ENCODE measurements at regions of chr17 and their contacts with region 1.

Region 1: DNA sequence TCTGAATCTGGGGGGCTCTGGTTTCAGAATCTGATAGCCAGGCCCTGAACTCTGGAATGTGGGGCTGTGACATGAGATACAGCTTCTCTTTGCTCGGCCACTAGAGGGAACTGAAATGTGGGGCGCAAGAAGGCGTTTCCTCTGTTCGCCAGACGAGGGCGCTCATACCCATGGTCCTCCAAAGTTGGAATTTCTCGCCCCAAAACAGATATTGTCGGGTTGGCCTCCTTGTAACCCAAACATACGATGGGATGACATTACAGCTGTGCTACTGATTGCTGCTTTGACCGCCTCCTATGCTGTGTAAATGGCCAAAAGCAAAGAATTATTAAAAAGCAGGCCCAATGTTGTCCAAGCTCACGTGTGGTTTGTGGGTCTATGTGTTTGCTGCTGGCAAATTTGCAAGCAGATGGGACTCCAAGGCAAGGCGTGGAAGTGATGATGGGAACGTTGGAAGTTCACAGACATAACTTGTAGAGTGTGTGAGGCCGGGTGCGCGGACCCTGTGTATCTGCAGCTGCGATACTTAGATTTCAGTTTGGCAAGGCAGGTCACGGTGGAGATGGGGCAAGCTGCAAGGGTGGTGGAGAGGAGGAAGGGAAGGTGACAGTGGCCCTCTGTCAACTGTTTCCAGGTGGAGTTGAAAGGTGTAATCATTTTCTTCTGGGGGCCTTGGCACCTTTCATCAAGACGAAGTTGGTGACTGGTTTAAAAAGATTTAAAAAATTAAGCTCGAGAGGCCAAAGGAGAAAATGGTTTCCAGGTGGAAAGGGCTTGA is 13.0 kb upstream of the MSI2 start:
- DNase-seq: peak; percentile 71 to 75 (median 72)
- H3K4me3 ChIP-seq: no peak overlapping the region
- H3K4me3 Mint-ChIP-seq: no peak overlapping the region
- H3K27ac ChIP-seq: no peak overlapping the region
- H3K27ac Mint-ChIP-seq: peak overlapping the region in 1 of 7 donors; percentile 51
- H3K4me1 ChIP-seq: peaks cover 3% of the 10 kb centered on the region
- H3K4me1 Mint-ChIP-seq: peaks cover 0 to 7% (median 0%) of the 10 kb centered on the region in 4 donors
- H3K27me3 ChIP-seq: no peaks in the 10 kb centered on the region
- H3K27me3 Mint-ChIP-seq: peaks cover 3 to 7% of the 10 kb centered on the region in 2 donors

Region 2: DNA sequence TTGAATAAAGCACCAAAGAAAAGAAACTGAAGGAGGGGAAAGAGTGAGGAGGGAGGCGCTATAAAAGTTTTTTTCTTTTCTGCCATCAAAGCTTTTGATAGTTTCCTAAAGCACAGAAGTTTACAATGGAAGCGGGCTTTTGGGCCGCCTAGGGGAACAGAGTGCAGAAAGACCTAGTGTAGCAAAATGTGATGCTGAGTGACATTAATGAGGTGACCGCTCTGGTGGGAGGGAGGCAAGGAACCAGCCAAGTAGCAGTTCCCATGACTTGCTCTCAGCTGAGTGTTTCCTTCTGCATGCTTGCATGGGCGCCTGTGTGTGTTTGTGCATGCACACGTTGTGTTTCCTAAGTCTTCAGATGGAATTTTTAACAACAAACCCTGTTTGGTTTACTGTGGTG is 28.5 kb after region 1 on chr17:
- CTCF ChIA-PET with region 1: interaction called, 16 read pairs
- POLR2A ChIA-PET with region 1: no interaction called
- intact Hi-C with region 1: no loop called
- DNase-seq: no peak
- H3K4me3 ChIP-seq: no peak overlapping the region
- H3K4me3 Mint-ChIP-seq: no peak overlapping the region
- H3K27ac ChIP-seq: no peak overlapping the region
- H3K27ac Mint-ChIP-seq: peak overlapping the region in 1 of 7 donors; percentile 17
- H3K4me1 ChIP-seq: peaks cover 9% of the 10 kb centered on the region
- H3K4me1 Mint-ChIP-seq: peaks cover 20 to 70% (median 36%) of the 10 kb centered on the region in 4 donors
- H3K27me3 ChIP-seq: no peaks in the 10 kb centered on the region
- H3K27me3 Mint-ChIP-seq: no peaks in the 10 kb centered on the region

Region 3: DNA sequence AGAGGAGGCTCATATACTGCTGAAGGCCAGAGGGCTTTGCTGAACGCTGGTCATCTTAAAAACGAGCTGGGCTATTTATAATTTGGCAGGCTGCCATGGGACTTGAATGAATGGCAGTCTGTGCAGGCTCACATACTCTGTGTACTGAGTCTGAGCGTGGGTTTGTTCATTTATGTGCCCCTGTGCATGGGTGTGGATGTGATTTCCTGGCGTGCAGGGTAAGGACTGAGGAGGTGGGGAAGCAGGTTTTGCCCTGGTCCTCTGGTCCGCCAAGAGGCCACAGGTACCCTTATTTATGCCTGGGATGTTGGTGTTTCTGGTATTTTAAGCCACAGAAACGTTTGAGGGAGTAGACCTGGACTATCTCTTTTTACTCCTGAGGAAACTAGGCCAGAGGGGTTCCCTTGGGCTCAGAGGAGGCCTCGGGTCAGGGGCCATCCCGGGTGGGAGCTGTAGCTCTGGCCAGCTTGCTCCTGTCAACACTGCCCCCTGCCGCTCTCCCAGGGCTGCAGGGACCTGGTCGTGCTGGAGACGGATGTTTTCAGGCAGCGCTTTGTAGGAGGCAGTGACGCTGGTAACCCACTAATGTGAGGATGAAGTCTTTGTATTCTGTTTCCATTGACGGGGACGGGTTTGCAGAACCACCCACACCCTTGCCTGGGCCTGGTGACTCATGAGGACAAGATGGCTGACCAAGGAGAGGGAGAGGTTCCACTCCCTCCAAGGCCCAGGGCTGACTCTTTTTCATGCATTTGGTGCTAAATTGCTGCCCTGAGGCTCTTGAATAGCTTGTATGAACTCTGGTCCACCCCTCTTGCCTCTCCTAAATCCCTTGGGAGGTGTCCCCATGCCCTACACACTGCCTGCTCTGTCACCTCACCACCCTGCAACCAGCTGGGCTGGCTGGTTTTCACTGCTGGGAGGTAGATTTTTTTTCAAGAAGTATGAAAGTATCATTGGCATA is 197.4 kb after region 1 on chr17:
- CTCF ChIA-PET with region 1: interaction called, 40 read pairs
- POLR2A ChIA-PET with region 1: interaction called, 5 read pairs
- intact Hi-C with region 1: loop called (anchors 5 kb)
- DNase-seq: peak; percentile 54 to 87 (median 67)
- H3K4me3 ChIP-seq: peak overlapping the region in 1 of 2 donors; percentile 5
- H3K4me3 Mint-ChIP-seq: peak overlapping the region in 7 of 8 donors; percentile 8 to 73 (median 53)
- H3K27ac ChIP-seq: peak overlapping the region; percentile 29
- H3K27ac Mint-ChIP-seq: peak overlapping the region; percentile 65 to 94 (median 82)
- H3K4me1 ChIP-seq: peaks cover 50% of the 10 kb centered on the region
- H3K4me1 Mint-ChIP-seq: peaks cover 50 to 81% (median 60%) of the 10 kb centered on the region in 4 donors
- H3K27me3 ChIP-seq: no peaks in the 10 kb centered on the region
- H3K27me3 Mint-ChIP-seq: no peaks in the 10 kb centered on the region

Region 4: GRCh38 chr17:57671667-57672632 is 428.6 kb after region 1 on chr17:
- CTCF ChIA-PET with region 1: interaction called, 36 read pairs
- POLR2A ChIA-PET with region 1: no interaction called
- intact Hi-C with region 1: loop called (anchors 1 kb)
- DNase-seq: peak; percentile 62 to 68 (median 67)
- H3K4me3 ChIP-seq: no peak overlapping the region
- H3K4me3 Mint-ChIP-seq: peak overlapping the region in 6 of 8 donors; percentile 16 to 71 (median 52)
- H3K27ac ChIP-seq: peak overlapping the region; percentile 10
- H3K27ac Mint-ChIP-seq: peak overlapping the region; percentile 14 to 86 (median 77)
- H3K4me1 ChIP-seq: peaks cover 19% of the 10 kb centered on the region
- H3K4me1 Mint-ChIP-seq: peaks cover 7 to 37% (median 20%) of the 10 kb centered on the region in 4 donors
- H3K27me3 ChIP-seq: no peaks in the 10 kb centered on the region
- H3K27me3 Mint-ChIP-seq: no peaks in the 10 kb centered on the region

Region 5: GRCh38 chr17:57833179-57833939 is 590.0 kb after region 1 on chr17:
- CTCF ChIA-PET with region 1: interaction called, 23 read pairs
- POLR2A ChIA-PET with region 1: no interaction called
- intact Hi-C with region 1: loop called (anchors 1 kb)
- DNase-seq: peak; percentile 58 to 65 (median 61)
- H3K4me3 ChIP-seq: no peak overlapping the region
- H3K4me3 Mint-ChIP-seq: no peak overlapping the region
- H3K27ac ChIP-seq: no peak overlapping the region
- H3K27ac Mint-ChIP-seq: no peak overlapping the region
- H3K4me1 ChIP-seq: peaks cover 10% of the 10 kb centered on the region
- H3K4me1 Mint-ChIP-seq: peaks cover 0 to 5% (median 0%) of the 10 kb centered on the region in 4 donors
- H3K27me3 ChIP-seq: no peaks in the 10 kb centered on the region
- H3K27me3 Mint-ChIP-seq: no peaks in the 10 kb centered on the region